Sigmoid colon (tissue), 7 donors: ENCODE measurements at regions of chr20 and their contacts with region 1.

Region 1: GRCh38 chr20:21125849-21126580 is at the start of gene KIZ:
- DNase-seq: peak; percentile 98
- H3K4me3 ChIP-seq: peak within 1 kb of the TSS; percentile 96 to 100 (median 98)
- H3K27ac ChIP-seq: peak within 1 kb of the TSS; percentile 83 to 97 (median 92)
- H3K4me1 ChIP-seq: peaks cover 0 to 31% (median 21%) of the 10 kb centered on the region in 4 donors
- H3K27me3 ChIP-seq: no peaks in the 10 kb centered on the region
- CTCF ChIP-seq: peak; percentile 28 to 62 (median 44)
- EP300 ChIP-seq: peak in 1 of 4 donors; percentile 49
- POLR2A ChIP-seq: peak; percentile 80 to 92
- total RNA-seq, gene KIZ: 171 to 291 (median 193) TPM

Region 2: DNA sequence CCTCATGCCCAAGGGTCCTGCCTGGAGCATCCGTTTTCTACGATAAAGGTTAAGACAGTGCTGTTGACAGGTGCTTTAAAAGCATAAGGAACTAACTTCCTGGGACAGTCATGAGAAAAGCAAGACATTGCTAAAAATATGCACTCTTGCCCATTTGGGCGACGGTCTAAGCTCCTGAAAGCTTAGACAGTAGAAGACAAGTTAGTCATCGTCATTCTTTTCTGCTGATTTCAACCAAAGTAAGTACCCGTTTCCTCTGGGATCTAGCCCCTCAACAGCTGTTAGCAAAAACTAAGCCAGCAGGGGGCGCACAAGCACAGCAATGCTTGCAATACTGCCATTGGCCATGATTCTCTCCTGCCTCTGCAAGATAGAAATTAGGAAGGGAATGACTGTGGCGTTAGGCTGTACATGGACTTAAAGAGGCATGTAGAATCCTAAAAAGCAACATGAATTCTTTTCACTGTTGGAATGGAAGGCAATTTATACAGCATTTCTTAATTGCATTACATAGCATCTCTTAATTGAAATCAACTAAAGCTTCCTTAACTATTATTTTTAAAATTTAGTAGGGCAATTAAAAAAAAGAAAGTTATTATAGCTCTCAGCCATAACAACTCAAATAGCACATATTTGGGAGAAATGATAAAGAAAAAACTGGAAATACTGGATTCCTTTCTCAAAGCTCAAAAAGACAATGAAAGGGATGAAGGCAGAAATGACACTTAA is 265.8 kb before region 1 on chr20:
- intact Hi-C with region 1: loop called (anchors 10 kb)
- DNase-seq: peak; percentile 88
- H3K4me3 ChIP-seq: no peak overlapping the region
- H3K27ac ChIP-seq: no peak overlapping the region
- H3K4me1 ChIP-seq: no peaks in the 10 kb centered on the region
- H3K27me3 ChIP-seq: peaks cover 0 to 22% (median 4%) of the 10 kb centered on the region in 3 donors
- CTCF ChIP-seq: peak; percentile 77 to 92 (median 86)
- EP300 ChIP-seq: no peak
- POLR2A ChIP-seq: no peak

Region 3: DNA sequence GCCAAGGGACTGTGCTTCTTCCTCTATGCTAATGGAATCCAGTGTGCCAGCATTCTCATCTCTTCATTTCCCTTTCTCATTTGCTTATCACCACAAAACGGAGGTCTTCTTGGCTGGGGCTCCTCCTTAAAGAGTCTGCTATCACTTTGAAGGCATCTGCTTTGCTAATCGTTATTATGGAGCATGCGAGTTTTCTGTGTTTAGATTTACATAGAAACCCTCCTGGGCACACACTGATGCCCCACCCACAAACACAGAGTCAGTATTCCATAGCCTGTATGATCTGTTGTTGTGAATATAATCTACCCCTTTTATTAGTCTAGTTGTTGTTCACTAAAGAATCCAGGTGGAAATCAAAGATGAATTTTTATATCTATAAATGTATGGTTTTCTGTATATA is 93.7 kb after region 1 on chr20:
- intact Hi-C with region 1: loop called (anchors 5 kb)
- DNase-seq: no peak
- H3K4me3 ChIP-seq: no peak overlapping the region
- H3K27ac ChIP-seq: no peak overlapping the region
- H3K4me1 ChIP-seq: peaks cover 0 to 10% (median 0%) of the 10 kb centered on the region in 4 donors
- H3K27me3 ChIP-seq: no peaks in the 10 kb centered on the region
- CTCF ChIP-seq: no peak
- EP300 ChIP-seq: no peak
- POLR2A ChIP-seq: no peak

Region 4: DNA sequence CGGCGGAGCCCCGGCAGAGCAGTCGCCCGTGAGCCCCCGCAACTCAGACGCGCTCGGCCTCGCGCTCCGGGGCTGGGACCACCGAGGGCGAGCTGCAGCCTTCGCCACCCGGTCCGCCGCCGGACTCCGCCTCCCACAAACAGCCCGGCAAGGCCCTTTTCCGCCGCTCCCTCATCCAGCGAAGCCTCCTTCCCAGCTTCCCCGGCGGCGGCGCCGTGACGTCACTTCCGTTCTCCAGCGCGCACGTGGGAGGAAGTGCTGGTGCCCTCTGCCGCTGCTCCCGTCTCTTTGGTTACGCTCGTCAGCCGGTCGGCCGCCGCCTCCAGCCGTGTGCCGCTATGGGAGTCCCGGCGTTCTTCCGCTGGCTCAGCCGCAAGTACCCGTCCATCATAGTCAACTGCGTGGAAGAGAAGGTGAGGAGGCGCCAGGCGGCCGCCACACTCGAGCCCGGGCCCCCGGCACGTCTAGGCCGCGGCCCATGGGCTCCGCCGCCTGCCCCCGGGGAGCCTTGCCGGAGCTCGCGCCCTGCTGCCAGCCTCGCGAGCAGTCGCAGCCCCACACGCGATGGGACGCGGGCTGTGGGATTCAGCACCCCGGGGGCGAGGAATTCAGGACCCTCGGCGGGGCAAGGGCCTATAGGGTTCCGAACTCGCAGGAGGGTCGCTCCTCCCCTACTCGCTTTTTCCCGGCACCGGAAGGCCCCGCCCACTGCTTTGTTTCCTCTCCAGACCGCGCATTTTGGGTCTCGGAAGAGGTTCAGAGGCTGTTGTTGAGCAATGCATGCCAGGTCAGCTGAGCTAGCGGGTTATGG is 177.3 kb after region 1 on chr20 and contains the start of gene XRN2:
- intact Hi-C with region 1: loop called (anchors 5 kb)
- DNase-seq: peak; percentile 98
- H3K4me3 ChIP-seq: peak within 1 kb of the TSS; percentile 76 to 98 (median 92)
- H3K27ac ChIP-seq: peak within 1 kb of the TSS; percentile 91 to 98 (median 94)
- H3K4me1 ChIP-seq: peaks cover 0 to 24% (median 17%) of the 10 kb centered on the region in 4 donors
- H3K27me3 ChIP-seq: no peaks in the 10 kb centered on the region
- CTCF ChIP-seq: no peak
- EP300 ChIP-seq: no peak
- POLR2A ChIP-seq: peak; percentile 66 to 77
- total RNA-seq, gene XRN2: 53.5 to 79.8 (median 66.1) TPM

Region 5: GRCh38 chr20:21640561-21641182 is 514.7 kb after region 1 on chr20:
- intact Hi-C with region 1: no loop called
- DNase-seq: no peak
- H3K4me3 ChIP-seq: no peak overlapping the region
- H3K27ac ChIP-seq: no peak overlapping the region
- H3K4me1 ChIP-seq: no peaks in the 10 kb centered on the region
- H3K27me3 ChIP-seq: no peaks in the 10 kb centered on the region
- CTCF ChIP-seq: no peak
- EP300 ChIP-seq: no peak
- POLR2A ChIP-seq: no peak